ENCODE measurements at regions of chr15 and their contacts with region 1.

Region 1: DNA sequence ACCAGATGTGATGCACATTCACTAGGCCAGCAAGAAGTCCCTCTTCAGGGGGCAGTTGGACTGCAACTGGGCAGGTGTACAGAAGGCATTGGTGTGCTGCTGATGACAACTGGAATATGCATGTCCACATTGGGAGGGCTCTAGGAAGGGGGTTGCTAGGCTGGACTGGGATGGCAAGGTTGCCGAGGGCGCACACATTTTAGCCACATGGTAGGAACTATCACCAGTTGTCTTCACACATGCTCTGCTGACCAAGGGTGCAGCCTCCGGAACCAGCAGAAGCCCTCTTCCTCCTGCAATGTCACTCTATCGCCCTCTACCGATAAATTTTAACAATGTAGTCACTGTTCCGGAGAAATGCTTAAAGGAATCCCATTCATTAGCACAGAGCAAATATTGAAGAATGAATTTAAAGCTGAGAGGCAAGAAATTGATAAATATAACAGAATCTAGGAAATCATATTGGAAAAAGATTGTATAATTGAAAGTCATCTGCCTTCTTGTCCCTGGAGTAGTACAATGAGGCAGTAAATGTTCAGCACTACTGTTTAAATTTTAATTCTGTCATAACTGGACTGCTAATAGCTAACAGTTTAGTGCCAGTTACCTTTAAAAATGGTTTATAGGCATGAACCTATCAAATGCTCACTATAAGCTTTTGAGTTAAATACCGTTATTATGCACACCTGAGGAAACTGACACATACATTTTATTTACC is 22.6 kb upstream of the LYSMD4 start:
- DNase-seq: peak; percentile 35
- H3K4me3 Mint-ChIP-seq: no peak overlapping the region
- H3K27ac Mint-ChIP-seq: no peak overlapping the region
- H3K4me1 Mint-ChIP-seq: no peaks in the 10 kb centered on the region
- H3K27me3 Mint-ChIP-seq: peaks cover 2% of the 10 kb centered on the region

Region 2: DNA sequence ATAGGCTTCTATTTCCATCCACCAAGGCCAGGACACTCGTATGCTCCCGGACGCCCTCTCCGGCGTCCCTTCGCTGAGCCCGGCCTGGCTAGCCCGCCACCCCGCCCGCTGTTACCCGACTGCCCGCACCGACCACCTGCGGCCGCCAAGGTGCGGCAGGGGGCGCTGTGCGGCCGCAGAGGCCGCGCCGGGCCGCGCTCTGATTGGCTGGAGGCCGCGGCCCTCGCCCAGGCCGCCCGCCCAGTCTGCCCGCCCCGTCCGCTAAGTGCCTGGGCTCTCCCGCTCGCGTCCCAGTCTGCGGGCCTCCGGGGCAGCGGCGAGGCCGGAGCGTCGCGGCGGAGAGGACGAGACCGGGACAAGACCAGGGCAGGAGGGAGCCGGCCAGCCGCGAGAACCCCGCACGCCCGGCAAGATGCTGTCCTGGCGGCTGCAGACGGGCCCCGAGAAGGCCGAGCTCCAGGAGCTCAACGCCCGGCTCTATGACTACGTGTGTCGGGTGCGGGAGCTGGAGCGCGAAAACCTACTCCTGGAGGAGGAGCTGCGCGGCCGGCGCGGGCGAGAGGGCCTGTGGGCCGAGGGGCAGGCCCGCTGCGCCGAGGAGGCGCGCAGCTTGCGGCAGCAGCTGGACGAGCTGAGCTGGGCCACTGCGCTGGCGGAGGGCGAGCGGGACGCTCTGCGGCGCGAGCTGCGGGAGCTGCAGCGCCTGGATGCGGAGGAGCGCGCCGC is 650.9 kb before region 1 on chr15 and contains the start of gene SYNM:
- CTCF ChIA-PET with region 1: interaction called, 4 read pairs
- POLR2A ChIA-PET with region 1: no interaction called
- intact Hi-C with region 1: loop called (anchors 10 kb)
- DNase-seq: peak; percentile 60
- H3K4me3 Mint-ChIP-seq: peak within 1 kb of the TSS; percentile 62
- H3K27ac Mint-ChIP-seq: no peak within 1 kb of the TSS
- H3K4me1 Mint-ChIP-seq: peaks cover 10% of the 10 kb centered on the region
- H3K27me3 Mint-ChIP-seq: peaks cover 35% of the 10 kb centered on the region
- total RNA-seq, gene SYNM: 2.6 to 2.7 TPM

Region 3: DNA sequence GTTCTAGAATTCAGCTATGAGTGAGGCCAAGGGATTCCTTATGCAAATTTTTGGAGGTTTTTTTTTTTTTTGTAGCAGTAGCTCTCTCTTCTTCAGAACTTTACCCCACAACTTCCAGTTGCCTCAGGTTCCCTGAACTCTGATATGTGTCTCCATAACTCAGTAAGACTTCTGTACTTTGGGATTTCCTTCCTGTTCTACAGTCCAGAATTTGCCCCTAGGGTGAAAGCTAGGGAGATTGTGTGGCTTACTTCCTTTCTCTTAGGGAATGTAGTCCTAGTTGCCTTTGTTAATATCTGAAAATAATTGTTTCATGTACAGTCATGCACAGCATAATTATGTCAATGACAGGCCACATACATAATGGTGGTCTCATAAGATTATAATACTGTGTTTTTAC is 473.7 kb before region 1 on chr15:
- CTCF ChIA-PET with region 1: interaction called, 8 read pairs
- POLR2A ChIA-PET with region 1: no interaction called
- intact Hi-C with region 1: loop called (anchors 2 kb)
- DNase-seq: no peak
- H3K4me3 Mint-ChIP-seq: no peak overlapping the region
- H3K27ac Mint-ChIP-seq: no peak overlapping the region
- H3K4me1 Mint-ChIP-seq: peaks cover 40% of the 10 kb centered on the region
- H3K27me3 Mint-ChIP-seq: no peaks in the 10 kb centered on the region

Region 4: DNA sequence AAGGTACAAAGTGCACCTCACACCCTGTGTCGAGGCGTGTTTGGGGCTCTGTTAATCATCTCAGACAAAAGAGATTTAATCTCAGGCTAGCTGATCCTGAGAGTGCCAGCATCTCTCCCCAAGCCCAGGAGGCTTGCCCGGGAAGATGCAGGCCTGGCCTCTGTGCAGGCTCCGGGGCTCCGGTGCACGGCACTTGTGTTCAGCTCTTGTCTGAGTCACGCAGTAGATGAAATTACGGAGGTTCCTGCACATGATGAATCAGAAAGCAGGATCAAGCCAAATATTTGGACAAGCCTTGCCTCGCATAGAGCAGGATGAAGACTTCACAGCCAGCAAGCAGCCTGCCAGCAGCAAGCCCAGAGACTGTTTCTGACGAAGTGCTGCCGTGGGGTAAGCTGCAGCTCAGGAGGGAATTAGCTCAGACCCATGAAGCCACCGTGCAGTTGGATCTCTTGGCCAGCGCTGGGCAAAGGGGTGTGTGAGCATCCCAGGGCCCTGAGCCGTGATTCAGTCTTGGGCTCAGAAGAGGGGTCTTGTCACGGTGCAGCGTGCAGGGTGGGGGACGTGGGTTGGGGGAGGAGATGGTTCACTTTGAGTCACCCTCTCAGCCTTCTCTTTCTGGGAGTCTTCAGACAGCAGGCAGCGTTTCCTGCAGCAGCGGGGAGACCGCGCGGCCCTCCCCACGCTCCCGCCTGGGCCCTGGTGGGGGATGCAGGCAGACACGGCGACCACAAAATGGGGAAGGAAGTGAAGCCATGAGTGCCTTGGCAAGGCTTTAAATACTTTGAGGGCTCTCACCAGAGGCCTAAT is 279.2 kb before region 1 on chr15:
- CTCF ChIA-PET with region 1: no interaction called
- POLR2A ChIA-PET with region 1: no interaction called
- intact Hi-C with region 1: no loop called
- DNase-seq: no peak
- H3K4me3 Mint-ChIP-seq: no peak overlapping the region
- H3K27ac Mint-ChIP-seq: no peak overlapping the region
- H3K4me1 Mint-ChIP-seq: peaks cover 4% of the 10 kb centered on the region
- H3K27me3 Mint-ChIP-seq: no peaks in the 10 kb centered on the region

Region 5: GRCh38 chr15:99733268-99734039 is 22.4 kb before region 1 on chr15 and contains the start of gene LYSMD4:
- CTCF ChIA-PET with region 1: interaction called, 15 read pairs
- POLR2A ChIA-PET with region 1: no interaction called
- intact Hi-C with region 1: no loop called
- DNase-seq: peak; percentile 99
- H3K4me3 Mint-ChIP-seq: peak within 1 kb of the TSS; percentile 75
- H3K27ac Mint-ChIP-seq: peak within 1 kb of the TSS; percentile 92
- H3K4me1 Mint-ChIP-seq: peaks cover 11% of the 10 kb centered on the region
- H3K27me3 Mint-ChIP-seq: no peaks in the 10 kb centered on the region
- total RNA-seq, gene LYSMD4: 5.2 to 7.6 TPM

Measured in activated CD4-positive, alpha-beta memory T cell treated with anti-CD3 and anti-CD28 coated beads for 36 hours (primary cell).